ENCODE measurements at regions of chr2 and their contacts with region 1.

Region 1: GRCh38 chr2:191501561-191502168 is 176.3 kb upstream of the NABP1 start:
- DNase-seq: peak; percentile 48
- H3K4me3 ChIP-seq: no peak overlapping the region
- H3K27ac ChIP-seq: peak overlapping the region in 1 of 2 experiments; percentile 97; a peak in 2 of 4 replicates
- H3K4me1 ChIP-seq: peaks cover 6 to 32% of the 10 kb centered on the region in 2 experiments; a peak in 2 of 4 replicates
- H3K27me3 ChIP-seq: no peaks in the 10 kb centered on the region
- CTCF ChIP-seq: peak; percentile 86
- EP300 ChIP-seq: no peak
- RAD21 ChIP-seq: peak; percentile 92

Region 2: GRCh38 chr2:191150600-191151330 is 350.9 kb before region 1 on chr2 and contains the start of gene STAT4:
- CTCF ChIA-PET with region 1: interaction called, 14 read pairs
- POLR2A ChIA-PET with region 1: no interaction called
- DNase-seq: peak; percentile 40
- H3K4me3 ChIP-seq: peak within 1 kb of the TSS; percentile 47 to 49
- H3K27ac ChIP-seq: no peak within 1 kb of the TSS
- H3K4me1 ChIP-seq: no peaks in the 10 kb centered on the region; a peak in 1 of 4 replicates
- H3K27me3 ChIP-seq: no peaks in the 10 kb centered on the region
- CTCF ChIP-seq: no peak
- EP300 ChIP-seq: no peak
- RAD21 ChIP-seq: no peak
- polyA plus RNA-seq, gene STAT4: 0.12 and 0.19 TPM in 2 replicates

Region 3: DNA sequence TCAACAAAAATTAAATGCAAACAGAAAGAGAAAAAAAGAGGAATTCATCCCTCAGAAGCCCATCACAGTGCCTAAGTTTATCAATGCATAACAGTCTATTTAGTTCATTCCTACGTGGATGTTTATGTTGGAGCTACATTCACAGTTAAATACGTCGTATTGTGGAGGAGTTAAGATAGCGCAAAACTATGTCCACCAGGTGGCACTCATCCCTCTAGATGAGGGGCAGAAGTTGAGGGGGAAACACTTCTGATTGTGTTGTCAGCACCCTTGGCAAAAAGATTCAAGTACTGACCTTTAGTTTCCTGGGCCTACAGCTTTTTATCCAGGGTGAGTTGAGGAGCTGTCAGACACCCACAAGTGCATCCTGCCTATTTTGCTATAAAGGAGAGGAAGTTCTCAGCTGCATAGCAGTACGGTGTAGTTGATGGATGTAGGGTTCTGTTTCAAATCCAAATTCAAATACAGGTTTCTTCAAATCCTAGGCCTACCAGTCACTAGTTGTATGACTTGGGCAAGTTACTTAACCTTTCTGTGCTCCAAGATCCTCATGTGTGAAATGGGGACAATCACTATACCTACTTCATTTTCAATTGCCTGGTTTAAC is 283.3 kb before region 1 on chr2:
- CTCF ChIA-PET with region 1: interaction called, 68 read pairs
- POLR2A ChIA-PET with region 1: no interaction called
- DNase-seq: peak; percentile 48
- H3K4me3 ChIP-seq: no peak overlapping the region
- H3K27ac ChIP-seq: no peak overlapping the region
- H3K4me1 ChIP-seq: no peaks in the 10 kb centered on the region; a peak in 3 of 4 replicates
- H3K27me3 ChIP-seq: no peaks in the 10 kb centered on the region
- CTCF ChIP-seq: peak; percentile 76
- EP300 ChIP-seq: no peak
- RAD21 ChIP-seq: peak; percentile 81

Region 4: DNA sequence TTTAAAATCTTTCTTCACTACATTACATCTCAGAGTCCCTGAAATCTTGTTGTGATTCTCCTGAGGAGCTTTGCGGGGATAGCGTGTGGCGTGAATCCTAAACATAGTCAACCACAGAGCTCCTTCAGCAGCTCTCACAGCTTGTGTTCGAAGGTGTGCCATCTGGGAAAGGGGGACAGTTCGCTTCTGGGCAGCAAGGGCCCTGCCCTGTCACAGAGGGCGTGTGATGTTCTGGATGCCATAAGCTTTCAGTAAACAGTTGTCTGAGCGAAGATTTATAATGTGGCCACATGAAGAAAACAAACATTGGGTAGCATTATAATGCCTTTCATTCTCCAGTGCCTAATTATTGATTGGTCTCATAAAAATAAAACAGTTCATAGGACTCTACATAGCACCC is 83.9 kb before region 1 on chr2:
- CTCF ChIA-PET with region 1: interaction called, 12 read pairs
- POLR2A ChIA-PET with region 1: interaction called, 3 read pairs
- DNase-seq: no peak
- H3K4me3 ChIP-seq: no peak overlapping the region
- H3K27ac ChIP-seq: no peak overlapping the region
- H3K4me1 ChIP-seq: no peaks in the 10 kb centered on the region
- H3K27me3 ChIP-seq: no peaks in the 10 kb centered on the region
- CTCF ChIP-seq: no peak
- EP300 ChIP-seq: no peak
- RAD21 ChIP-seq: no peak

Region 5: DNA sequence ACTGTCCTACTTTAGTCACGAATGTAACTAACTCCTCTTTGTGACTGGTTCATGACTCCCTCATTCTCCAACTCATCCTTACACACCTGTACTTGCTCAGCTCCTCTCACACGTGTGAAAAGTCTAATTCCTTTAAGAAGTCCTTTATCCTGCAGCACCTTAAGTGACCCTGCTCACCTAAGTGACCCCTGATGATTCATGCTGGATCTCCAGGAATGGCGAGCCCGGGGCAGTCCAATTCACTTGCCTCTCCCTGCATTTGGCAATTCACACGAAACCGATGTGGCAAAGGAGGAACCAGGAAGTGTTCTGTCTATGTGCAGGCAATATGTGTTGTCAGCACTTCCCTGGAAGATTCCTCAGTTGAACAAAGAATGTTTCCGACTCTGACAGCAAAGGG is 13.5 kb before region 1 on chr2:
- CTCF ChIA-PET with region 1: interaction called, 22 read pairs
- POLR2A ChIA-PET with region 1: no interaction called
- DNase-seq: no peak
- H3K4me3 ChIP-seq: no peak overlapping the region
- H3K27ac ChIP-seq: no peak overlapping the region
- H3K4me1 ChIP-seq: peaks cover 2 to 6% of the 10 kb centered on the region in 2 experiments
- H3K27me3 ChIP-seq: no peaks in the 10 kb centered on the region
- CTCF ChIP-seq: no peak
- EP300 ChIP-seq: no peak
- RAD21 ChIP-seq: no peak

Region 6: DNA sequence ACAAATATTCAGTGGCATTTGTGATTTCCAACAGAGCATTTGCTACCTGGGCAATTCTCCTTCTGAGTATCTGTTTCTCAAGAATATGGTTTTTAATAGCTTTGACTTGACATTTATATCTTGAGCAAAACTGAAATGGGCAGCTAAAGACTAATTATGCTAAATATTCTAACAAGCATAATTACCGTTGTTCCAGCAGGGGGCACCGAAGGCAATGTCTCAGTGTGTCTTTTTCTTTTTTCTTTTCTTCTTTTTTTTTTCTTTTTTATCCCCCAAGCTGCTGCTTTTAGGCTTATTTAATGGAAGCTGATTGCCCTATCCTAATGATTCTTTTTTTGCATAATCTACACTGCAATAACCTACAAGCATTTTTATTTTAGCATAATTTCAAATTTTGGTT is 37.4 kb after region 1 on chr2:
- CTCF ChIA-PET with region 1: interaction called, 11 read pairs
- POLR2A ChIA-PET with region 1: no interaction called
- DNase-seq: peak; percentile 39
- H3K4me3 ChIP-seq: no peak overlapping the region
- H3K27ac ChIP-seq: peak overlapping the region in 1 of 2 experiments; percentile 78; a peak in 2 of 4 replicates
- H3K4me1 ChIP-seq: peaks cover 0 to 17% of the 10 kb centered on the region in 2 experiments; a peak in 2 of 4 replicates
- H3K27me3 ChIP-seq: no peaks in the 10 kb centered on the region
- CTCF ChIP-seq: peak; percentile 75
- EP300 ChIP-seq: no peak
- RAD21 ChIP-seq: peak; percentile 43

Region 7: DNA sequence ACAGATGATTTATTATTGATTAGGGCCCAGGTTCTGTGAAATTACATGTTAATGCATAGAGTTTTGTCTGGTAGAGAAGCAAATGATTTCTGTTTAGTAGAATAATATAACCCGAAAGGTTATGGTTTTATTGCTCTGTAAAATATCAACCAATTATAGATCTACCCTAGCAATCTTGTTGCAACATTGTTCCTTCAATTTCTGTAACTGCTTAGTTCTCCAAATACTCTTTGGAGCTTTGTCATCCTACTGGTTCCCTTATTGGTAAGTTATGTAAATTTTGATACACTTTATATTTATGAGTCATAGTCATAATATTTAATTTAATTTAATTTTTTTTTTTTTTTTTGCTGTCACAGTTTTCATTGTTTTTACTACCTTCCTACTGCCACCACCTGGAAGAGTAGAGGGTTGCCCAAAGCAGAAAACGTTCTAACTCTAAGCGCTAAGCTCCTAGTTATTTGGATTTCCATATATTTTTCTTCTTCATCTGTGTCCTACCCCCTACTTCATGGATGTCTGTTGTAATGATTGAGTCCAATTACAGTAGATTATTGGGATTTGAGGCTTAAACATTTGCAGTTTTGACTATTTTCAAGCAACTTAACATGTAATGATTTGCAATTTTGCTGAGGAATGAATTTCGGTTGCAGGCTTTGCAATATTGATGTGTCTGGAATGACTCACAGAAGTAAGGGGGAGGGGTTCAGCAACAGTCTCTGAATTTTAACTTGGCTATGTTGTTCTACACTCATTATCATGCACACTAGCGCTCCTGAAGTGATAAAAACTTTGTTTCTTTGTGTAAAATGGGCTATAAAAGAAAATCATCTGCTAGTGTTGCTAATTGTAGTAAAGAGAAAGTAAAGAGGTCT is 227.3 kb after region 1 on chr2:
- CTCF ChIA-PET with region 1: no interaction called
- POLR2A ChIA-PET with region 1: no interaction called
- DNase-seq: no peak
- H3K4me3 ChIP-seq: no peak overlapping the region
- H3K27ac ChIP-seq: no peak overlapping the region
- H3K4me1 ChIP-seq: no peaks in the 10 kb centered on the region; a peak in 1 of 4 replicates
- H3K27me3 ChIP-seq: no peaks in the 10 kb centered on the region
- CTCF ChIP-seq: peak; percentile 38; the same call in 1 of the 2 replicates
- EP300 ChIP-seq: no peak
- RAD21 ChIP-seq: no peak